ENCODE measurements at regions of chr2 and their contacts with region 1.

Region 1: GRCh38 chr2:85852937-85853498 is 35.8 kb downstream of the ST3GAL5 start:
- DNase-seq: peak; percentile 71
- H3K4me3 Mint-ChIP-seq: peak overlapping the region; percentile 74
- H3K27ac Mint-ChIP-seq: peak overlapping the region; percentile 100
- H3K4me1 Mint-ChIP-seq: peaks cover 65% of the 10 kb centered on the region
- H3K27me3 Mint-ChIP-seq: no peaks in the 10 kb centered on the region

Region 2: DNA sequence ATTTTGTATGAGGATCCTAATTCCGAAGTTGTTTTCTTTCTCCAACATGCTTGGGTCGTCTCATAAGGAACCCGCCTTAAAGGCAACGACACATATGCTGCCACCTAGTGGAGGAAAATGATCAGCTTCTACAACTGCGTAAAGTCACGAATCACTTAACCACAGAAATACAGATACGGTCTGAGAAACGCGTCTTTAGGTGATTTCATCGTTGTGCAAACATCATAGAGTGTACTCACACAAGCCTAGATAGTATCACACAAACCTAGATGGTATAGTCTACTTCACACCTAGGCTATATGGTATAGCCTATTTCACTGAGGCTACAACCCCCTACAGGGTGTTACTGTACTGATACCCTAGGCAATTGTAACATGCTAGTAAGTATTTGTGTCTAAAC is 145.7 kb before region 1 on chr2:
- CTCF ChIA-PET with region 1: no interaction called
- POLR2A ChIA-PET with region 1: no interaction called
- DNase-seq: peak; percentile 87
- H3K4me3 Mint-ChIP-seq: no peak overlapping the region
- H3K27ac Mint-ChIP-seq: peak overlapping the region; percentile 73
- H3K4me1 Mint-ChIP-seq: peaks cover 51% of the 10 kb centered on the region
- H3K27me3 Mint-ChIP-seq: peaks cover 21% of the 10 kb centered on the region

Region 3: DNA sequence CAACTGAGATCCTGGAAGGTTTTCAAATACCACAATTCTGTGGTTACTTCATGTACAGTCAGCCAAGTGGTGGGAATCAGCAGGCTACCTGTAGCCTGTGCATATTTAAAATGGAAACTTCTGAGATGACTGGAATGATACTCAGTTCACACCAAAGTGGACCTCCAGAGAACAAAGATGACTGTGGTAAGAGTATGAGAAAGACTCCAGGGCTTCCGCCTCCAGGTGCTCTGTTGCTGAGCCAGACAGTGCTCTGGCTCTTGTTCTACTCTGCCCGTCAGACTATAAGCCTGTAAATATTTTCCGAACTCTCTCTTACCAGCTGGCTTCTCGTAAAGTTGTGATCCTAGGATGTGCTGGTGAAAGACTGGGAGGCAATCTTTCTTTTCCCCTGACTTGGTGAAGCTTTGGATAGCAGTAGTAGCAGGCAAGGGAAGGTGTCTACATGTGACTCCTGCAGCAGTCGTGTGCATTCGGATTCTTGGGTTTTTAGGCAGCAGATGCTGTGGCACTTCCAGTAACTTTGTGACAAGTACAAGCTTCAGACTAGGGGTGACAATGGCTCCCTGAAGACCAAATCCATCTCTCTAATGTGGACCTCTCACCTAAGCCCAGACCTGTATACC is 12.6 kb after region 1 on chr2:
- CTCF ChIA-PET with region 1: interaction called, 12 read pairs
- POLR2A ChIA-PET with region 1: no interaction called
- DNase-seq: no peak
- H3K4me3 Mint-ChIP-seq: no peak overlapping the region
- H3K27ac Mint-ChIP-seq: no peak overlapping the region
- H3K4me1 Mint-ChIP-seq: peaks cover 55% of the 10 kb centered on the region
- H3K27me3 Mint-ChIP-seq: no peaks in the 10 kb centered on the region

Measured in activated CD4-positive, alpha-beta T cell treated with anti-CD3 and anti-CD28 coated beads, Interleukin-2, amount 10 ng/mL, durations not matched to agents 7 days and 5 days (primary cell).